Common myeloid progenitor, CD34-positive (primary cell): ENCODE measurements at regions of chr1 and their contacts with region 1.

Region 1: GRCh38 chr1:20696397-20697329 is 21.1 kb downstream of the KIF17 start:
- DNase-seq: peak; percentile 74 to 81 (median 78)
- H3K4me3 ChIP-seq: peak overlapping the region; percentile 38 to 85 (median 76)
- H3K27ac ChIP-seq: peak overlapping the region in 1 of 2 experiments; percentile 58
- H3K4me1 ChIP-seq: peaks cover 0 to 14% (median 7%) of the 10 kb centered on the region in 4 experiments
- H3K27me3 ChIP-seq: no peaks in the 10 kb centered on the region

Region 2: GRCh38 chr1:20633190-20634064 is 63.2 kb before region 1 on chr1 and contains the start of gene PINK1:
- CTCF ChIA-PET with region 1: no interaction called
- POLR2A ChIA-PET with region 1: no interaction called
- DNase-seq: peak; percentile 77 to 85 (median 84)
- H3K4me3 ChIP-seq: peak within 1 kb of the TSS; percentile 80 to 95 (median 86)
- H3K27ac ChIP-seq: peak within 1 kb of the TSS; percentile 50 to 78
- H3K4me1 ChIP-seq: peaks cover 6 to 15% (median 11%) of the 10 kb centered on the region in 4 experiments
- H3K27me3 ChIP-seq: no peaks in the 10 kb centered on the region

Region 3: DNA sequence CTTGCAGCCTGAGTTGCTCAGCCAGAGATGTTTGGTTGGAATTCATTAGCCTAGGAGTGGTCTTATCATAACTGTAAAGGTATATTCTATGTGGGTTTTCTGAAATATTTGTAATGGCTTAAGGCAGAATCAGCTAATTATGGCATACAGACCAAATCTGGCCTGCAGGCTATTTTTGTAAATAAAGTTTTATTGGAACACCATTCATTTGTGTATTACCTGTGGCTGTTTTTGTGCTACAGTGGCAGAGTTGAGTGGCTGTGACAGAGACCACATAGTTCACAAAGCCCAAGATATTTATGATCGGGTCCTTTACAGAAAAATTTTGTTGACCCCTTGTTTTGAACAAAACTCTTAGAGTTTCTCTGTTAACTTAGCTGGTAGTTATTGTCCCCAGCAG is 28.1 kb before region 1 on chr1:
- CTCF ChIA-PET with region 1: no interaction called
- POLR2A ChIA-PET with region 1: no interaction called
- DNase-seq: no peak
- H3K4me3 ChIP-seq: no peak overlapping the region
- H3K27ac ChIP-seq: no peak overlapping the region
- H3K4me1 ChIP-seq: peaks cover 0 to 8% (median 2%) of the 10 kb centered on the region in 4 experiments
- H3K27me3 ChIP-seq: no peaks in the 10 kb centered on the region

Region 4: DNA sequence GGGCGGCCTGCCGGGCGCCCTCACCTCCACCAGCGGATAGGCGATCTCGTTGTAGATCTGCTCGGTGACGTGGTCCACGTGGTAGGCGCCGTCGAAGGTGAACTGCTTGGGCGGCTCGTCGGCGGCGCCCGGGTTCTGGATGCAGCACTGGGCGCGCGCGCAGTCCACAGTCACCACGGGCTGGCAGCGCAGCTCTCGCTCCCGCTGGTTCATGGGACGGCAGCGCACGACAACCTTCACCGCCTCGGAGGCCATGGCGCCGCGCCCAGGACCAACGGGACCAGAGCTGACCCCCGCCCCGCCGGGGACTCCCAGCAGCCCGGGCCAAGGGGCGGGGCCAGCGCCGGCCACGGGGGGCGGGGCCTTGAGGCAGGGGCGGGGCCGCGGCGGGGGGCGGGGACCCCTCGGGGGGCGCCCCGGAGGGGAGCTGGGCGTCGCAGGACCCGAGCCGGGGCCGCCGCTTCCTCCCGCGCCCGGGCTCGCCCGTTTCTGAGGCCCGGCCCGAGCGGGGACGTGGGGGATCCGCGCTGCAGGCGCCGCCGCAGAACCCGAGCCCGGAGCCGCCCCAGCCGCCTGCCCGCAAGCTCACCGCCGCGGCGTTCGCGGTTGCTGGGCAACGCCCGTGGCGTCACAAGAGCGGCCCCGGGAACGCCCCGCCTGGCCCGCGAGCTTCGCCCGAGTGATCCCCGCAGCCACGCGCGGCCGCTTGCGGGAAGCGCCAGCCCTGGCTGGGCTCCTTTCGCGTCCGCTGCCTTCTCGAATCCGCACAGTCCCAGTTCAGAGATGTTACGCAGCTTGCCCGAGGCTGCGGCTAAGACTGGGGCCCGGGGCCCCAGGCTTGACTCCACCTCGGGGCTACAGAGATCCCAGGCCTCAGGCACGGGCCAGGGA is 21.0 kb after region 1 on chr1 and contains the start of gene KIF17:
- CTCF ChIA-PET with region 1: interaction called, 14 read pairs
- POLR2A ChIA-PET with region 1: no interaction called
- DNase-seq: peak; percentile 83 to 88 (median 85)
- H3K4me3 ChIP-seq: peak within 1 kb of the TSS in 6 of 7 experiments; percentile 3 to 66 (median 49)
- H3K27ac ChIP-seq: no peak within 1 kb of the TSS
- H3K4me1 ChIP-seq: peaks cover 0 to 10% (median 9%) of the 10 kb centered on the region in 4 experiments
- H3K27me3 ChIP-seq: peaks cover 5 to 49% (median 26%) of the 10 kb centered on the region in 5 experiments

Region 5: GRCh38 chr1:20732588-20733360 is 36.1 kb after region 1 on chr1 and contains the start of gene SH2D5:
- CTCF ChIA-PET with region 1: interaction called, 18 read pairs
- POLR2A ChIA-PET with region 1: no interaction called
- DNase-seq: peak; percentile 91 to 95 (median 95)
- H3K4me3 ChIP-seq: peak within 1 kb of the TSS; percentile 27 to 79 (median 62)
- H3K27ac ChIP-seq: no peak within 1 kb of the TSS
- H3K4me1 ChIP-seq: peaks cover 2 to 32% (median 22%) of the 10 kb centered on the region in 4 experiments
- H3K27me3 ChIP-seq: peaks cover 0 to 42% (median 24%) of the 10 kb centered on the region in 5 experiments